Activated CD4-positive, alpha-beta memory T cell treated with anti-CD3 and anti-CD28 coated beads, Interleukin-2, amount 10 ng/mL, durations not matched to agents 7 days and 5 days (primary cell): ENCODE measurements at regions of chr1 and their contacts with region 1.

Region 1: GRCh38 chr1:63691701-63692425 is 82.0 kb upstream of the ROR1 start:
- DNase-seq: peak; percentile 22
- H3K4me3 Mint-ChIP-seq: no peak overlapping the region
- H3K27ac Mint-ChIP-seq: no peak overlapping the region
- H3K4me1 Mint-ChIP-seq: peaks cover 1% of the 10 kb centered on the region
- H3K27me3 Mint-ChIP-seq: peaks cover 1% of the 10 kb centered on the region

Region 2: GRCh38 chr1:63615768-63616420 is 76.0 kb before region 1 on chr1:
- CTCF ChIA-PET with region 1: interaction called, 16 read pairs
- POLR2A ChIA-PET with region 1: no interaction called
- DNase-seq: peak; percentile 52
- H3K4me3 Mint-ChIP-seq: no peak overlapping the region
- H3K27ac Mint-ChIP-seq: no peak overlapping the region
- H3K4me1 Mint-ChIP-seq: no peaks in the 10 kb centered on the region
- H3K27me3 Mint-ChIP-seq: no peaks in the 10 kb centered on the region

Region 3: GRCh38 chr1:63651161-63651701 is 40.6 kb before region 1 on chr1:
- CTCF ChIA-PET with region 1: interaction called, 13 read pairs
- POLR2A ChIA-PET with region 1: no interaction called
- DNase-seq: peak; percentile 36
- H3K4me3 Mint-ChIP-seq: peak overlapping the region; percentile 57
- H3K27ac Mint-ChIP-seq: peak overlapping the region; percentile 97
- H3K4me1 Mint-ChIP-seq: peaks cover 36% of the 10 kb centered on the region
- H3K27me3 Mint-ChIP-seq: no peaks in the 10 kb centered on the region

Region 4: DNA sequence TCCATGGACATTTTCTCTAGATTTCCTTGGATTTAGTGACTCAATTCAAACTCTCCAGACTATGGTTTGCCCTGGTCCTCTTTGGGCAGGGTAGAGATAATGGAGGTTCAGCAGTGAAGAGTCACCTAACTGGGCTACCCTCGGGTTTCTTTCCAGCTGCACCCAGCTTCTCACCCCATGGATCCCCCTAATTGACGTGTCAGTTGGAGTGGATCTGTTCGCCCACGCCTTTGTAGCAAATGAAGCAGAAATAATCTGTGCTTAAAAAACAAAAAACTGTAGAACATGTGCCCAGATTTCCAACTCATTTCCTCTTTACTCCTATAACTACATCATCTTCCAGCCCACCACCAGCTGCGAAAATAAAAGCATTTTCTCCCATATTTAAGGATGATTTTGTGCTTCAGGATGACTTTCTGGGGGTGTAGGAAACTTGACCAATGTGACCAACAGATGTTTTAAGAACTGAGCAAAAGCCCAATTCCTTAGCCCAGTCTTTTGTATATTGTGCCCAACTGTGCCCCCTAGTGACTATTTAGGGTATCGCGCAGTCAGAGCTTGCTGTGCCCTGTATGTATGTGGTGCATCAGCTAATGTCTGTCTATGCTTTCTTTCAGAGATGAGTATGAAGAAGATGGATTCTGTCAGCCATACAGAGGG is 445.0 kb after region 1 on chr1:
- CTCF ChIA-PET with region 1: interaction called, 24 read pairs
- POLR2A ChIA-PET with region 1: no interaction called
- DNase-seq: peak; percentile 69
- H3K4me3 Mint-ChIP-seq: no peak overlapping the region
- H3K27ac Mint-ChIP-seq: no peak overlapping the region
- H3K4me1 Mint-ChIP-seq: no peaks in the 10 kb centered on the region
- H3K27me3 Mint-ChIP-seq: peaks cover 4% of the 10 kb centered on the region

Region 5: DNA sequence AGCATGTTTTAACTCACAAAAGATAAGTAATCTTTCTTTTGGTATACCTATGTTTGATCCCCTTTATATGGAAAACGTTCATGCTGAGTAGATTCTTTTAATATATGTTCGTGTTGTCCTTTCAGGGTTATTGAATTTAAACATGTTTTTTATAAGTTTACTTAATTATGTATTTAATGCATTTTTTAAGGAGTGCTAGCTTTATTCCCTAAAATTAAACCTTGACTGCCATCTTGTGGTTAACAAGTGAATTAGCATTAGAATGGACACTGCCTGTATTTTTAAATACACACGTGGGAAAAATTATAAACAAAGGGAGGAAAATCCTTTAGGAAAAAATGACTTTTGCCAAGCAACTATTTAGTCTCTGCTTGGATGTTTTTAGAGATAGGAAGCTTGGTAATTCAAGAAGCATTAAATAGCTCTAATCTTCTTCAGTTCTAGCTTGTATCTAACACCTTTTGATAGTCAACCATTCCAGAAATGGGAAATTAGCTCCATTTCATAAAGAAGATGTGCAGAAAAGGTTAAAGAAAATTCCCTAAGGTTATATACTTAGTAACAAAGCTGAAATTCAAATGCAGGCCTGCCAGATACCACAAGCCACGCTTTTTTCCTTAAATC is 554.5 kb after region 1 on chr1:
- CTCF ChIA-PET with region 1: interaction called, 18 read pairs
- POLR2A ChIA-PET with region 1: interaction called, 3 read pairs
- DNase-seq: no peak
- H3K4me3 Mint-ChIP-seq: no peak overlapping the region
- H3K27ac Mint-ChIP-seq: no peak overlapping the region
- H3K4me1 Mint-ChIP-seq: peaks cover 13% of the 10 kb centered on the region
- H3K27me3 Mint-ChIP-seq: peaks cover 21% of the 10 kb centered on the region